Sigmoid colon (tissue), 7 donors: ENCODE measurements at regions of chr21 and their contacts with region 1.

Region 1: GRCh38 chr21:34526618-34527290 is 14.7 kb upstream of the KCNE1 start:
- DNase-seq: peak; percentile 92
- H3K4me3 ChIP-seq: peak overlapping the region; percentile 26 to 53 (median 40)
- H3K27ac ChIP-seq: peak overlapping the region; percentile 76 to 94 (median 90)
- H3K4me1 ChIP-seq: peaks cover 0 to 53% (median 42%) of the 10 kb centered on the region in 4 donors
- H3K27me3 ChIP-seq: no peaks in the 10 kb centered on the region
- CTCF ChIP-seq: no peak
- EP300 ChIP-seq: peak; percentile 46 to 94 (median 68)
- POLR2A ChIP-seq: peak; percentile 24 to 62

Region 2: GRCh38 chr21:34582506-34583150 is 55.9 kb after region 1 on chr21:
- intact Hi-C with region 1: loop called (anchors 5 kb)
- DNase-seq: no peak
- H3K4me3 ChIP-seq: no peak overlapping the region
- H3K27ac ChIP-seq: peak overlapping the region in 1 of 4 donors; percentile 42
- H3K4me1 ChIP-seq: peaks cover 0 to 29% (median 16%) of the 10 kb centered on the region in 4 donors
- H3K27me3 ChIP-seq: no peaks in the 10 kb centered on the region
- CTCF ChIP-seq: peak in 1 of 4 experiments; percentile 22
- EP300 ChIP-seq: no peak
- POLR2A ChIP-seq: no peak

Region 3: GRCh38 chr21:34614633-34615486 is 88.1 kb after region 1 on chr21 and contains the start of gene RCAN1:
- intact Hi-C with region 1: loop called (anchors 2 kb)
- DNase-seq: peak; percentile 95
- H3K4me3 ChIP-seq: peak within 1 kb of the TSS; percentile 60 to 89 (median 74)
- H3K27ac ChIP-seq: peak within 1 kb of the TSS; percentile 89 to 93 (median 90)
- H3K4me1 ChIP-seq: peaks cover 0 to 28% (median 16%) of the 10 kb centered on the region in 4 donors
- H3K27me3 ChIP-seq: no peaks in the 10 kb centered on the region
- CTCF ChIP-seq: no peak
- EP300 ChIP-seq: no peak
- POLR2A ChIP-seq: peak in 1 of 2 donors; percentile 17
- total RNA-seq, gene RCAN1: 21.4 to 79.6 (median 28.2) TPM

Region 4: DNA sequence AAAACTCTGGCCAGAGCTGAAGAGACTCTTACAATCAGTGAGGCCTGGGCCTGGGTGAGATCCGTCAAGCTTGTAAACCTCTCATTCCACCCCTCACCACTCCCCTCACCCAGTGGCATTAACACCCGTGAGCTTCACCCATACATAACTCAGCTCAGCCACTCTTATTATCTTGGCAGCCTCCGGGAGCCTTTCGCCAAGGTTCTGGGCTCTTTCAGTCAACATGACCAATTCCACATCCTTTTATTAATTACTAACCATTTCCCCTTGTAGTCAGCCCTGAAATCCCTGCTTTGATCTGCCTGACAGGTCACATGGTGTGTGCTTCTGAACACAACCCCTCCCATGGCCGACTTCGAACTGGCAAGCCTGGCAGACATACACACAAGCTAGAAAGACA is 1398.7 kb after region 1 on chr21:
- intact Hi-C with region 1: loop called (anchors 5 kb)
- DNase-seq: peak; percentile 69
- H3K4me3 ChIP-seq: no peak overlapping the region
- H3K27ac ChIP-seq: peak overlapping the region in 3 of 4 donors; percentile 31 to 42 (median 34)
- H3K4me1 ChIP-seq: peaks cover 0 to 12% (median 6%) of the 10 kb centered on the region in 4 donors
- H3K27me3 ChIP-seq: no peaks in the 10 kb centered on the region
- CTCF ChIP-seq: no peak
- EP300 ChIP-seq: no peak
- POLR2A ChIP-seq: no peak